HEK293 (cell line): ENCODE measurements at regions of chr19 and their contacts with region 1.

Region 1: DNA sequence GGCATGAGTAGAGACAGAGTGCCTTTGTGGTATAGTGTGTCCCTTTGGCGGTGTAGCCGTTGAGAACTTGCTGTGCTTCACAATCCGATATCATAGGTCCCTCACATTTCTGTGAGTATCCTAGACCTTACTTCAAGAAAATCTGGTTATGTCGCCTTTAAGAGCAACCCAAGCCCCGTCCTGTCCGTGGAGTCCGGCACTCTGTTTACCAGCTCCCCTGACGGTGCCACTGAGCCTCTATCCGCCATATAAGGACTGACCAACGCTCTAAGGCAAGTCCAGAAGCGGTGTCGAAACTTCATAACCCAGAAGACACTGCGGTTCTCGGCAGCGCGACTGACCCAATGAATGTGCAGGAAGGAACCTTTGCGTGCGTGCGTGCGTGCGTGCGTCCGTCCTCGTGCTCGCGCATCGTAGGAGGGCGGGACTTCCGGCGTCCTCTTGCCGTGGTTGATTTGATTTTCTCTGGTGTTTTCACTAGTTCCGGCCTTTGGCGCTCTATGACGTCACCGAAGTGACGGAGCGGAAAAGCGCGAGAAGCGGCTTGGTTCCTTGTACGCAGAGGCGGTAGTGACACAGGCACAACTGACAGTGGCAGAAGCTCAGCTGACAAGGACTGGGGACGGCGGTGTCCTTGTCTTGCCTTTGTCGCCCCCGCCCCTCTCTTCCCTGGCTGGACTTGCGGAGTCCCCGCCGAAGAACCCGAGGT is at the starts of genes TRAPPC2B and ZNF547:
- H3K4me3 ChIP-seq: peak within 1 kb of the TSS; percentile 86
- H3K27ac ChIP-seq: peak within 1 kb of the TSS; percentile 54
- H3K4me1 ChIP-seq: peaks cover 4% of the 10 kb centered on the region; the same call in 1 of the 2 replicates
- CTCF ChIP-seq: no peak

Region 2: GRCh38 chr19:57350877-57351805 is 12.0 kb before region 1 on chr19 and contains the start of gene ZNF304:
- CTCF ChIA-PET with region 1: interaction called, 3 read pairs
- POLR2A ChIA-PET with region 1: interaction called, 29 read pairs
- H3K4me3 ChIP-seq: peak within 1 kb of the TSS; percentile 81
- H3K27ac ChIP-seq: peak within 1 kb of the TSS; percentile 34
- H3K4me1 ChIP-seq: peaks cover 6% of the 10 kb centered on the region; the same call in 1 of the 2 replicates
- CTCF ChIP-seq: no peak

Region 3: DNA sequence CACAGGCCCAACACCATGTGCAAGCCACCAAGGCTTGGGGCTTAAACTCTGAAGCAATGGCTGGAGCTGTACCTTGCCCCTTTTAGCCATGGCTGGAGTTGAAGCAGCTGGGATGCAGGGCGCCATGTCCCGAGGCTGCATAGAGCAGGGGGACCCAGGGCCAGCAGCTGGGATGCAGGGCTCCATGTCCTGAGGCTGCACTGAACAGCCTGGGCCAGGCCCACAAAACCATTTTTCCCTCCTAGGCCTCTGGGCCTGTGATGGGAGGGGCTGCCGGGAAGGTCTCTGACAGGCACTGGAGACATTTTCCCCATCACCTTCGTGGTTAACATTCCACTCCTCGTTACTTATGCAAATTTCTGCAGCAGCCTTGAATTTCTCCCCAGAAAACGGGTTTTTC is 11.0 kb after region 1 on chr19:
- CTCF ChIA-PET with region 1: no interaction called
- POLR2A ChIA-PET with region 1: no interaction called
- H3K4me3 ChIP-seq: no peak overlapping the region
- H3K27ac ChIP-seq: no peak overlapping the region
- H3K4me1 ChIP-seq: no peaks in the 10 kb centered on the region
- CTCF ChIP-seq: no peak